B cell (primary cell): ENCODE measurements at regions of chr1 and their contacts with region 1.

Region 1: GRCh38 chr1:162056043-162056442 is 13.4 kb upstream of the NOS1AP start:
- DNase-seq: peak; percentile 48
- ATAC-seq: peak; percentile 43
- H3K4me3 ChIP-seq: no peak overlapping the region
- H3K4me3 Mint-ChIP-seq: no peak overlapping the region
- H3K27ac ChIP-seq: no peak overlapping the region
- H3K27ac Mint-ChIP-seq: no peak overlapping the region
- H3K4me1 ChIP-seq: no peaks in the 10 kb centered on the region
- H3K4me1 Mint-ChIP-seq: no peaks in the 10 kb centered on the region
- H3K27me3 ChIP-seq: peaks cover 0 to 11% (median 4%) of the 10 kb centered on the region in 4 experiments
- H3K27me3 Mint-ChIP-seq: peaks cover 33% of the 10 kb centered on the region
- CTCF ChIP-seq: peak; percentile 64

Region 2: GRCh38 chr1:162391790-162392563 is 335.9 kb after region 1 on chr1:
- CTCF ChIA-PET with region 1: interaction called, 6 read pairs
- POLR2A ChIA-PET with region 1: no interaction called
- intact Hi-C with region 1: loop called (anchors 1 kb)
- DNase-seq: peak; percentile 22
- ATAC-seq: no peak
- H3K4me3 ChIP-seq: no peak overlapping the region
- H3K4me3 Mint-ChIP-seq: no peak overlapping the region
- H3K27ac ChIP-seq: no peak overlapping the region
- H3K27ac Mint-ChIP-seq: no peak overlapping the region
- H3K4me1 ChIP-seq: peaks cover 3 to 5% of the 10 kb centered on the region in 2 donors
- H3K4me1 Mint-ChIP-seq: peaks cover 10% of the 10 kb centered on the region
- H3K27me3 ChIP-seq: peaks cover 0 to 8% (median 0%) of the 10 kb centered on the region in 4 experiments
- H3K27me3 Mint-ChIP-seq: peaks cover 28% of the 10 kb centered on the region
- CTCF ChIP-seq: peak; percentile 68

Region 3: GRCh38 chr1:162627662-162628296 is 571.7 kb after region 1 on chr1:
- CTCF ChIA-PET with region 1: interaction called, 6 read pairs
- POLR2A ChIA-PET with region 1: no interaction called
- intact Hi-C with region 1: loop called (anchors 2 kb)
- DNase-seq: peak; percentile 31
- ATAC-seq: no peak
- H3K4me3 ChIP-seq: no peak overlapping the region
- H3K4me3 Mint-ChIP-seq: no peak overlapping the region
- H3K27ac ChIP-seq: no peak overlapping the region
- H3K27ac Mint-ChIP-seq: no peak overlapping the region
- H3K4me1 ChIP-seq: no peaks in the 10 kb centered on the region
- H3K4me1 Mint-ChIP-seq: no peaks in the 10 kb centered on the region
- H3K27me3 ChIP-seq: peaks cover 0 to 19% (median 4%) of the 10 kb centered on the region in 4 experiments
- H3K27me3 Mint-ChIP-seq: peaks cover 34% of the 10 kb centered on the region
- CTCF ChIP-seq: peak; percentile 67

Region 4: DNA sequence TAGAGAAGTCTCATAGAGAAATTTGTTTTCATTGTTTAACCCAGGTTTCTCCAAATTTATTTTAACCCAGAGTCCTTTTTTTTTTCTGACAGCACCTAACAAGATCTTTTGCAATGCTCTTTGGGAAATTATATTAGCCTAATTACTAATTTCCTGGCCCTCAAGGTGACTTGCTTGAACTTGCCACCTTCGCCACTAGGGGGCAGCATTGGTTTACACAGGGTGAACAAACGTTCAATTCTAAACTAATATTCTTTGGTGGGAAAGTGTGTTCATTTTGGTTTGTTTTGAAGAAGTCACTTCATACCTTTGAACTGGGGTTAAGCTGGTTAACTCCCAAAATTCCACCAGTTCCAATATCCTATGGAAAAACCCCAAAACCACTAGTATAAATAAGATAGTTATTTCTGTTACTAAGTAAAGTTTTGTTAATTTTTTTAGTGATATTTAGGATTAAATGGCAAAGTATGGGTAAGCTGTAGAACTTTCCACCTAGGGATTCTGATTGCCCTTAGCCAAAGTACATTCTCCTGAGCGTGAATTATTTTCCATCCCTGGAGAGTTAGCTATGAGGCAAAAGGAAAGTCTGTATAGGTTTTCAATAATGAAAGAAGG is 791.9 kb after region 1 on chr1:
- CTCF ChIA-PET with region 1: no interaction called
- POLR2A ChIA-PET with region 1: no interaction called
- intact Hi-C with region 1: loop called (anchors 5 kb)
- DNase-seq: peak; percentile 69
- ATAC-seq: peak; percentile 51
- H3K4me3 ChIP-seq: no peak overlapping the region
- H3K4me3 Mint-ChIP-seq: no peak overlapping the region
- H3K27ac ChIP-seq: no peak overlapping the region
- H3K27ac Mint-ChIP-seq: no peak overlapping the region
- H3K4me1 ChIP-seq: no peaks in the 10 kb centered on the region
- H3K4me1 Mint-ChIP-seq: no peaks in the 10 kb centered on the region
- H3K27me3 ChIP-seq: peaks cover 0 to 4% (median 0%) of the 10 kb centered on the region in 4 experiments
- H3K27me3 Mint-ChIP-seq: peaks cover 16% of the 10 kb centered on the region
- CTCF ChIP-seq: peak; percentile 96